ENCODE measurements at regions of chr12 and their contacts with region 1.

Region 1: DNA sequence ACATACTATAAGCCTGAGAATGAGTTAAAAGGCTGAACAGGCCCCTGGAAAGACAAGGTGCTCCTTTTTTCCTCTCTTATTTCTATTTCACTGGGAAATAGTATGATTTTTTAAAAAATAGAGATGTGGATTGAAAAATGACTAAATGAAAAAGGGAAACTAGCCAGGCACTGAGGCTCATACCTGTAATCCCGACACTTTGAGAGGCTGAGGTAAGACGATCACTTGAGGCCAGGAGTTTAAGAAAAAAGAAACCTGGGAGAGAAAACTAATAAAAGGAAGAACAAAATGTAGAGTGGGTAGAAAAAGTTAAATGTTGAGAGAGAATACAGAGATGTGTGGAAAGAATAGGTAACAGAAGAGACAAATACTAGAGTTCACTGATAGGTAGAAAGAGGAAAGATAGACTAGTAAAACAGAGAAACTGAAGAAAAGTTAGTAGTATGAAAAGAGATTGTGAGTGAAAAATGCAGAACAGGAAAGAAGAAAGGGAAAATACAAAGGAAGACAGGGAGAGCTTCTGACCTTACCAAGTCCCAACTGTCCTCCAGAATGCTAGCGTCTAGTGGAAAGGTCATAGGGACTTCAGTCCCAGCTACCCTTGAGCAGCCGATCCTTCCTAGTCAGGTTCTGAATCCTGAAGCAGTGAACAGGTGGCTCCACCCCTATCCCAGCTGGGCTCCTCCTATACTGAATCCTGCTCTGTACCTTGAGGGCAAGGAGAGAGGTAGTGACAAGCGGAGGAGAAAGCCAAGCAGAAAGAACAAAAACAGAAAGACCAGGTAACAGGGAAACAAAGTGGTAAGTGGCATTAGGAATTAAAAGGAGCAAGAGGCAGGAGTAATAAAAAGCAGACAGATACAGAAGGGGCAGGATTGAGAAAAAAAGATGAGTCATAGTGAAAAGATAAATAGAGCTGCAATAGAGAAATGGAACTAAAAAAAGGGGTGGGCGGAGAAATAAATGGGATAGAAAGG is 7.3 kb downstream of the TMEM116 start:
- DNase-seq: no peak
- ATAC-seq: no peak
- H3K4me3 Mint-ChIP-seq: no peak overlapping the region
- H3K27ac Mint-ChIP-seq: peak overlapping the region; percentile 30 to 94 (median 58)
- H3K4me1 Mint-ChIP-seq: peaks cover 19 to 55% (median 44%) of the 10 kb centered on the region in 4 donors
- H3K27me3 Mint-ChIP-seq: no peaks in the 10 kb centered on the region

Region 2: DNA sequence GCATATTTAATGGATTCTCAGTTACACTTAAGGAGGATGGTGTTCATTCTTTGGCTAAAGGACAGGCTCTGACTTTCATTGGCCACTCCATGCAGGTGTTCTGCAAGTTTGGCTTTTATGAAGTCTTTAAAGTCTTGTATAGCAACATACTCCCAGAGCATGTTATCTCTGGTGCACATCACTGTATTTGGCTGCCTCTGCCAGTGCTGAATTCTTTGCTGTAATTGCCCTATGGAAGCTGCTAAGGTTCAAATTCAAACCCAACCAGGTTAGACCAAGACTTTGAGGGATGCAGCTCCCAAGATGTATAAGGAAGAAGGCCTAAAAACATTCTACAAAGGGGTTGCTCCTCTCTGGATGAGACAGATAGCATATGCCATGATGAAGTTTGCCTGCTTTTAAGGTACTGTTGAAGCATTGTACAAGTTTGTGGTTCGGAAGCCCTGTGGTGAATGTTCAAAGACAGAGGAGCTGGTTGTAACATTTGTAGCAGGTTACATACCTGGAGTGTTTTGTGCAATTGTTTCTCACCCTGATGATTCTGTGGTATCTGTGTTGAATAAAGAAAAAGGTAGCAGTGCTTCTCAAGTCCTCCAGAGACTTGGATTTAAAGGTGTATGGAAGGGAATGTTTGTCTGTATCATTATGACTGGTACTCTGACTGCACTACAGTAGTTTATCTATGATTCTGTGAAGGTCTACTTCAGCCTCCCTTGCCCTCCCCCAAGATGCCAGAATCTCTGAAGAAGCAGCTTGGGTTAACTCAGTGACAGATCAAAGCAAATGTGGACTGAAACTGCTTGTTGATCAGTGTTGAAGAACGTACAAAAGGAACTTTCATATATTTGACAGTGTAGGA is 12.2 kb before region 1 on chr12:
- POLR2A ChIA-PET with region 1: interaction called, 269 read pairs
- DNase-seq: peak in 8 of 10 donors; percentile 25 to 81 (median 60)
- ATAC-seq: peak; percentile 86 to 88
- H3K4me3 Mint-ChIP-seq: peak overlapping the region; percentile 68 to 95 (median 86)
- H3K27ac Mint-ChIP-seq: peak overlapping the region; percentile 78 to 97 (median 92)
- H3K4me1 Mint-ChIP-seq: peaks cover 28 to 80% (median 76%) of the 10 kb centered on the region in 4 donors
- H3K27me3 Mint-ChIP-seq: no peaks in the 10 kb centered on the region

Measured in naive thymus-derived CD8-positive, alpha-beta T cell (primary cell).